CD8-positive, alpha-beta T cell (primary cell): ENCODE measurements at regions of chr2 and their contacts with region 1.

Region 1: GRCh38 chr2:222690564-222691200 is 19.2 kb downstream of the MOGAT1 start:
- DNase-seq: peak; percentile 31 to 85 (median 74)
- ATAC-seq: peak; percentile 100
- H3K4me3 ChIP-seq: no peak overlapping the region
- H3K4me3 Mint-ChIP-seq: no peak overlapping the region
- H3K27ac ChIP-seq: no peak overlapping the region
- H3K27ac Mint-ChIP-seq: no peak overlapping the region
- H3K4me1 ChIP-seq: no peaks in the 10 kb centered on the region
- H3K4me1 Mint-ChIP-seq: peaks cover 9% of the 10 kb centered on the region
- H3K27me3 ChIP-seq: peaks cover 0 to 4% of the 10 kb centered on the region in 2 experiments
- H3K27me3 Mint-ChIP-seq: no peaks in the 10 kb centered on the region
- CTCF ChIP-seq: peak; percentile 100

Region 2: DNA sequence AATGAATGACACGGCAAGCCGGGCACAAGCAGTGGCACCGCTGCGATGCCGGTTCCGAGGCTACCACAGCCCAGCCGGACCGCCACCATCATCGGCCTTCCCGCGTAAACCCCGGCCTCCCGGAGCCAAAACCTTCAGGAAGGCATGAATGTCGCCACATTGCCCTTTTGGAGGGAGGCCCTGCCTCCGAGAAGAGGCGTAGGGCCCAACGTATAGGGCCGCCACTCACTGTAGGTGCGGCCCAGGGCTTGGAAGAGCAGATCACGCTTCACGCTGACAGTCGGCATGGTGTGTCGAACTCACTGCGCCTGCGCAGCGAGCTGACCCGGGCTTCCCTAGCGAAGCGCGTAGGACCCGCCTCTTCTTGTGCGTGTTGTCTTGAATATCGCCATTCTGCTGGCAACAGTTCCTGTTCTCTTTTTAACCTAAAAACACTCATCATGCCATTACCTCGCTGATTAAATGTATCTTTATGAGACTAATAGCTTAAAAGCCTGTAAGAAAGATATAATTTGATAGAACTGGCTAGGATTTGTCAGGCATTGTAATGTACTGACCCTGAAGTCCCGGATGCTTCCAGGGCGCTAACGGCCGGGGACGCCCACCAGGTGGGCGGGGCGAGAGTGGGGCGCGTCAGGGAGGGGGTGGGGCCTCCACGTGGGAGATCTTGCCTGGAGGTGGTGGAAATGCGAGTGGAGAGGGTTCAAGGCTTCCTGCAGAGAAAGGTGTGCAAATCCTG is 34.7 kb before region 1 on chr2 and contains the start of gene FARSB:
- CTCF ChIA-PET with region 1: interaction called, 4 read pairs
- POLR2A ChIA-PET with region 1: no interaction called
- intact Hi-C with region 1: loop called in 1 of 2 experiments (anchors 1 kb)
- DNase-seq: peak; percentile 83 to 98 (median 92)
- ATAC-seq: peak; percentile 92
- H3K4me3 ChIP-seq: peak within 1 kb of the TSS; percentile 87 to 94
- H3K4me3 Mint-ChIP-seq: peak within 1 kb of the TSS; percentile 97
- H3K27ac ChIP-seq: peak within 1 kb of the TSS; percentile 89 to 95
- H3K27ac Mint-ChIP-seq: peak within 1 kb of the TSS; percentile 100
- H3K4me1 ChIP-seq: peaks cover 28% of the 10 kb centered on the region
- H3K4me1 Mint-ChIP-seq: peaks cover 44% of the 10 kb centered on the region
- H3K27me3 ChIP-seq: no peaks in the 10 kb centered on the region
- H3K27me3 Mint-ChIP-seq: no peaks in the 10 kb centered on the region
- CTCF ChIP-seq: no peak
- total RNA-seq, gene FARSB: 7.2 to 8.5 TPM

Region 3: GRCh38 chr2:222707689-222708525 is 17.2 kb after region 1 on chr2:
- CTCF ChIA-PET with region 1: interaction called, 16 read pairs
- POLR2A ChIA-PET with region 1: no interaction called
- intact Hi-C with region 1: no loop called
- DNase-seq: peak; percentile 49 to 85 (median 71)
- ATAC-seq: peak; percentile 71
- H3K4me3 ChIP-seq: no peak overlapping the region
- H3K4me3 Mint-ChIP-seq: no peak overlapping the region
- H3K27ac ChIP-seq: no peak overlapping the region
- H3K27ac Mint-ChIP-seq: no peak overlapping the region
- H3K4me1 ChIP-seq: no peaks in the 10 kb centered on the region
- H3K4me1 Mint-ChIP-seq: no peaks in the 10 kb centered on the region
- H3K27me3 ChIP-seq: peaks cover 2 to 3% of the 10 kb centered on the region in 2 experiments
- H3K27me3 Mint-ChIP-seq: peaks cover 29% of the 10 kb centered on the region
- CTCF ChIP-seq: peak; percentile 99